ENCODE measurements at regions of chr1 and their contacts with region 1.

Region 1: GRCh38 chr1:23699280-23700179 is 7.9 kb downstream of the RPL11 start:
- DNase-seq: no peak
- ATAC-seq: peak; percentile 6; the same call in 1 of the 2 replicates
- H3K4me3 Mint-ChIP-seq: no peak overlapping the region
- H3K27ac Mint-ChIP-seq: peak overlapping the region; percentile 83
- H3K4me1 Mint-ChIP-seq: peaks cover 27% of the 10 kb centered on the region
- H3K27me3 Mint-ChIP-seq: no peaks in the 10 kb centered on the region
- CTCF ChIP-seq: no peak

Region 2: DNA sequence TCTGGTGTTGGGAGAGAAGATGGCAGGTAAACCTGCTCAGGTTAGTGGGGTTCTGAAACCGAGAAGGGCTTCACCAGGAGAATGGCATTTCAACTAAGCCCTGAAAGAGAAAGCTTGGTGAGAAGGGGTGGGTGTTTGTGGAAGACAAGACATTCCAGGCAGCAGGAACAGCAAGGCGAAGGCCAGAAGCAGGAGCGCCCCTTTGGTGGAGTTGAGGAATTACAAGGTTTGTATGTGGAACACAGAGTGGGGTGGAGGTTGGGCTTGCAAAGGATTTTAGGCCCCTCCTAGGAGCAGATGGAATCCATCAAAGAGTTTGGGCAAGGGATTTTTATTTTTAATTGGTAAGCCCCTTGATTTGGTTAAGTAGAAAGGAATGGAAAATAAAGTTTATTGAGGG is 19.0 kb after region 1 on chr1:
- CTCF ChIA-PET with region 1: interaction called, 12 read pairs
- POLR2A ChIA-PET with region 1: no interaction called
- DNase-seq: peak; percentile 76
- ATAC-seq: peak; percentile 99
- H3K4me3 Mint-ChIP-seq: no peak overlapping the region
- H3K27ac Mint-ChIP-seq: no peak overlapping the region
- H3K4me1 Mint-ChIP-seq: peaks cover 8% of the 10 kb centered on the region
- H3K27me3 Mint-ChIP-seq: no peaks in the 10 kb centered on the region
- CTCF ChIP-seq: peak; percentile 61